ENCODE measurements at regions of chr4 and their contacts with region 1.

Region 1: GRCh38 chr4:40185830-40186664 is 10.8 kb upstream of the RHOH start:
- DNase-seq: peak; percentile 20
- H3K4me3 Mint-ChIP-seq: no peak overlapping the region
- H3K27ac Mint-ChIP-seq: peak overlapping the region; percentile 70
- H3K4me1 Mint-ChIP-seq: peaks cover 17% of the 10 kb centered on the region
- H3K27me3 Mint-ChIP-seq: no peaks in the 10 kb centered on the region
- CTCF ChIP-seq: no peak

Region 2: DNA sequence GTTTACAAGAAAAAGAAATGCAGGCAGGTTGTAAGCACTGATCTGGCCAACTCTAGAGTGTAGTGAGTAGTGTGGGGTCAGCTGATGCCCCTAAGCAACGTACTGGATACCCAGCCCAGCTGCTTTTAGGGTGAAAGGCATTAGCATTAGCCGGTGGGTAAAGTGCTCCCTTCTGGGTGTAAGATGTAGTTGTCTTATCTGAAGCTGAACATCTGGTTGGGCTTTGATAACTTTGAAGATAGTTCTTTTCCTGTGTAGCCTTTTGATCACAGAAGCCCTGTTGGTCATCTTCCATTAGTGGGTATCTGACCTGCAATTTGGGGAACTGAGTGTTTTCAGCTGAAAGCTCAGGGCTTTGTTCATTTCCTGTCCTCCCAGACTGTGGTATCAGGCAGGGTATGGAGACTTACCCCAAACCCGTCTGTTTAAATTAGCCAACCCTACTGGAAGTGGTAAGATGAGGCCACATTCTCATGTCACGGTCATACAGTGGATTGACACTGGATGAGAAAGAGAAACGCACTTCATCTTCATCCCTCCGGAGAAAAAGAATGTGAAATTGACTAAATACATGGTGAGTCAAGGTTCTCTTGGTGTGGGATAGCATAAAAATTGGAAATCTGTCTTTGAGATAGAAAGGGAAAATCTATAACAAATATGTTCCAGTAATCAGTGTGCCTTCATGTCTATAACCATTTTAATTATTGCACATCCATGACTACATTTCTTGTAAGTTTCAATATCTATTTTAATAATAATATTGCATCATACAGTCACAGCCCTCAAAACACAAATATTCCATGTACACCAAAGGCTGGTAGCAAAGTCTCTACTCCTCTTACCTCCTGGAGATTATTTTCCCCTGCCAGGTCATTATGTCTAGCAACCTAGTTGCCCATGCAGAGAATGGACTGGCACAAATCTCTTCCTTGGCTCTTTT is 19.5 kb after region 1 on chr4:
- CTCF ChIA-PET with region 1: no interaction called
- POLR2A ChIA-PET with region 1: interaction called, 13 read pairs
- intact Hi-C with region 1: no loop called
- DNase-seq: no peak
- H3K4me3 Mint-ChIP-seq: no peak overlapping the region
- H3K27ac Mint-ChIP-seq: no peak overlapping the region
- H3K4me1 Mint-ChIP-seq: peaks cover 6% of the 10 kb centered on the region
- H3K27me3 Mint-ChIP-seq: no peaks in the 10 kb centered on the region
- CTCF ChIP-seq: no peak

Region 3: GRCh38 chr4:40255393-40256281 is 69.6 kb after region 1 on chr4:
- CTCF ChIA-PET with region 1: interaction called, 3 read pairs
- POLR2A ChIA-PET with region 1: interaction called, 19 read pairs
- intact Hi-C with region 1: loop called (anchors 5 kb)
- DNase-seq: peak; percentile 92
- H3K4me3 Mint-ChIP-seq: peak overlapping the region; percentile 1
- H3K27ac Mint-ChIP-seq: peak overlapping the region; percentile 86
- H3K4me1 Mint-ChIP-seq: peaks cover 40% of the 10 kb centered on the region
- H3K27me3 Mint-ChIP-seq: no peaks in the 10 kb centered on the region
- CTCF ChIP-seq: no peak

Region 4: GRCh38 chr4:40395908-40396793 is 210.1 kb after region 1 on chr4:
- CTCF ChIA-PET with region 1: no interaction called
- POLR2A ChIA-PET with region 1: no interaction called
- intact Hi-C with region 1: no loop called
- DNase-seq: peak; percentile 98
- H3K4me3 Mint-ChIP-seq: no peak overlapping the region
- H3K27ac Mint-ChIP-seq: no peak overlapping the region
- H3K4me1 Mint-ChIP-seq: peaks cover 10% of the 10 kb centered on the region
- H3K27me3 Mint-ChIP-seq: no peaks in the 10 kb centered on the region
- CTCF ChIP-seq: no peak

Region 5: GRCh38 chr4:40564004-40564403 is 378.0 kb after region 1 on chr4:
- CTCF ChIA-PET with region 1: no interaction called
- POLR2A ChIA-PET with region 1: no interaction called
- intact Hi-C with region 1: no loop called
- DNase-seq: no peak
- H3K4me3 Mint-ChIP-seq: no peak overlapping the region
- H3K27ac Mint-ChIP-seq: no peak overlapping the region
- H3K4me1 Mint-ChIP-seq: no peaks in the 10 kb centered on the region
- H3K27me3 Mint-ChIP-seq: no peaks in the 10 kb centered on the region
- CTCF ChIP-seq: no peak